Spleen (tissue), 13 donors: ENCODE measurements at regions of chr2 and their contacts with region 1.

Region 1: DNA sequence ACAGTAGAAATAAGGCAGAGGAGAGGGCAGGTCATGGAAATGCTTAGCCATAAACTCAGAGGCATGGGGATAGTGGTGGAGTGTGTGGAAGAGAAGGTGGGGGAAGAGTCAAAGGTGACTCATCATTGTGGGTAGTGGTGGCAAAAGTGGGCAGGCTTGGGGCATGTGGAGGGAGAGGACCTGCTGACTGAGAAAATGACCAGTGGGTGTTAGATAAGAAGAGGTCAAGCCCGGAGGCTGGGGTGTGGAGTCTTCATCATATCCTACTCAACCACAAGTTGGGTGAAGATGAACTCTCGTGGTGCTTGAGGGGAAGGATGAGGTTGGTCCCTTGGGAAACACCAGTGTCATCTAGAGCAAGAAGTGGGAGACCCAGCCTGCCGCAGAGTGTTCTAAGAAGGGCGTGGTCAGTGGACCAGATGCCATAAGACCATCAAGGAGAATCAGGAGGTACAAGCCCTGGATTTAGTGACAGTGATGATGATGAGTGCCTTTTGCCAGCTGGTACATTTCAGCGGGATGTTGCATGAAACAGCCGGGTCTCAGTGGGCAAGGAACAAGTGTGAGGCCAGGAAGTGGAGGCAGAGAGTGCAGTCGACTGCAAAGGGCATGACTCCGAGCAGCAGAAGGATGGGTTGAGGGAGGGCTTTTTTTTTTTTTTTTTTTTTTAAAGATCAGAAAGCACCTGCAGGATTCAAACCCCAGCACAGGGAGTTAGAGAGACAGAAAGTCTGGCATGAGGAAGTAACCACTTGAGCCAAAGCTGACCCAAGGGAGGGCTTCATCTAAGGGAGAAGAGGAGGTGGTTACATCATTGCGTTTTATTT is 122.6 kb upstream of the SPRED2 start:
- DNase-seq: no peak
- H3K4me3 ChIP-seq: no peak overlapping the region
- H3K27ac ChIP-seq: no peak overlapping the region
- H3K4me1 ChIP-seq: peaks cover 0 to 20% (median 10%) of the 10 kb centered on the region in 6 donors
- H3K27me3 ChIP-seq: no peaks in the 10 kb centered on the region
- CTCF ChIP-seq: no peak
- POLR2A ChIP-seq: no peak

Region 2: GRCh38 chr2:65443509-65444201 is 111.3 kb before region 1 on chr2:
- intact Hi-C with region 1: loop called (anchors 5 kb)
- DNase-seq: no peak
- H3K4me3 ChIP-seq: no peak overlapping the region
- H3K27ac ChIP-seq: no peak overlapping the region
- H3K4me1 ChIP-seq: no peaks in the 10 kb centered on the region
- H3K27me3 ChIP-seq: no peaks in the 10 kb centered on the region
- CTCF ChIP-seq: no peak
- POLR2A ChIP-seq: no peak